Activated CD4-positive, alpha-beta memory T cell treated with anti-CD3 and anti-CD28 coated beads for 36 hours (primary cell): ENCODE measurements at regions of chr10 and their contacts with region 1.

Region 1: GRCh38 chr10:133261726-133262325 is 14.8 kb downstream of the ADAM8 start:
- DNase-seq: peak; percentile 92
- H3K4me3 Mint-ChIP-seq: peak overlapping the region; percentile 79
- H3K27ac Mint-ChIP-seq: peak overlapping the region; percentile 90
- H3K4me1 Mint-ChIP-seq: peaks cover 76% of the 10 kb centered on the region
- H3K27me3 Mint-ChIP-seq: peaks cover 2% of the 10 kb centered on the region

Region 2: GRCh38 chr10:132961787-132962622 is 299.8 kb before region 1 on chr10:
- CTCF ChIA-PET with region 1: no interaction called
- POLR2A ChIA-PET with region 1: no interaction called
- intact Hi-C with region 1: loop called (anchors 5 kb)
- DNase-seq: peak; percentile 89
- H3K4me3 Mint-ChIP-seq: peak overlapping the region; percentile 74
- H3K27ac Mint-ChIP-seq: peak overlapping the region; percentile 79
- H3K4me1 Mint-ChIP-seq: peaks cover 18% of the 10 kb centered on the region
- H3K27me3 Mint-ChIP-seq: peaks cover 9% of the 10 kb centered on the region

Region 3: DNA sequence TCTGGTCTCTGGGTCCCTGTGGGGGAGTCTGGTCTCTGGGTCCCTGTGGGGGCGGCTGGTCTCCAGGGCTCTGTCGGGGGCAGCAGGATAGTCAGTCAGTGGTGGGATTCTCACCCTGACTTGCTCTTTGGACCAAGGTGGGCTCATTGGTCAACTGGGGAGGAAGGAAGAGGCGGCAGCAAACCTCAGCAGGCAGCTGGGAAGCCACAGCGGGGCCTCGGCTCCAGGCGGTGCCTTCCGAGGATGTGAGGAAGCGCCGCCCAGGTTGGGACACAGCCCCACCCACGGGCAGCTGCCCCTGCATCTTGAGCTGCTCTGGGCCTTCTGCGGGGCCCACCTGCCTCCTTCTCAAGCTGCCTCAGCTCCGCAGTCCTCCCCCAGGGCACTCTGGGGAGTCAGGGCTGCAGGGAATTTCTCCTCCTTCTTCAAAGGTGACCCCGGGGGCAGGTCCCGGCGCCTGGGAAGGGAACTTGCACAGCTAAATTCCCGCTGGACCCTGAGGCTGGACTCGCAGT is 122.2 kb before region 1 on chr10:
- CTCF ChIA-PET with region 1: interaction called, 10 read pairs
- POLR2A ChIA-PET with region 1: no interaction called
- intact Hi-C with region 1: no loop called
- DNase-seq: peak; percentile 8
- H3K4me3 Mint-ChIP-seq: no peak overlapping the region
- H3K27ac Mint-ChIP-seq: no peak overlapping the region
- H3K4me1 Mint-ChIP-seq: peaks cover 3% of the 10 kb centered on the region
- H3K27me3 Mint-ChIP-seq: peaks cover 8% of the 10 kb centered on the region

Region 4: DNA sequence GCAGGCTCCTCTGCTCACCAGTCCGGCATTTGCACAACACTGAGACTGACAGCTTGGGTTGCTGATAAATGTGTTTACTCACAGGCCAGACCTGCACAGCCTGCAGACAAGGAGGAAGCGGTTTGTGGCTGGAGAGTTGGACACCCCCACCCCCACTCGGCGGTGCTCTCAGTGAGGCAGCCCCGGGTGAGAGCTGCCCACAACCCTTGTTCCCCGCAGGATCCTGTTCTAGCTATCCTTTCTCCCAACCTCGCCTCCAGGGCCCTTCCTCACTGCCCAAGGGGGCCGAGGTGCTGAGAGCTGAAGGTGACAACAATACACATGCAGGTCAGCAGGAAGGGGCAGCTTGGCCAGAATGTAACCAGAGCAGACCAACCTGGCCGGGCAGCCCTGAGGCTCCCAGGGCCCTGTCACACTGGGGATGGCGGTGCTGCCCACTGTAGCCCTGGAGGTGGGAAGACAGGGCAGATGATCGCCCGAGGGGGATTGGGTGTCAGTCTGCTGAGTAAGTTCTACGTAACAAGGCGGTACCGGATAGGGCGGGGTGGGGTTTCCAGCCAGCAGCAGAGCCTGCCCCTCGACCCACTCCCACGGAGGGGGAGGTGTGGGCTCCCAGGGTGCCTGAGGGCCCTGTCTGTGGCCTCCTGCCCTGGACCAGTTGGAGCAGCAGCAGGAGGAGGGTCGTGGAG is 16.9 kb after region 1 on chr10:
- CTCF ChIA-PET with region 1: interaction called, 28 read pairs
- POLR2A ChIA-PET with region 1: interaction called, 61 read pairs
- intact Hi-C with region 1: loop called (anchors 1 kb)
- DNase-seq: peak; percentile 83
- H3K4me3 Mint-ChIP-seq: peak overlapping the region; percentile 63
- H3K27ac Mint-ChIP-seq: peak overlapping the region; percentile 85
- H3K4me1 Mint-ChIP-seq: peaks cover 28% of the 10 kb centered on the region
- H3K27me3 Mint-ChIP-seq: no peaks in the 10 kb centered on the region

Region 5: DNA sequence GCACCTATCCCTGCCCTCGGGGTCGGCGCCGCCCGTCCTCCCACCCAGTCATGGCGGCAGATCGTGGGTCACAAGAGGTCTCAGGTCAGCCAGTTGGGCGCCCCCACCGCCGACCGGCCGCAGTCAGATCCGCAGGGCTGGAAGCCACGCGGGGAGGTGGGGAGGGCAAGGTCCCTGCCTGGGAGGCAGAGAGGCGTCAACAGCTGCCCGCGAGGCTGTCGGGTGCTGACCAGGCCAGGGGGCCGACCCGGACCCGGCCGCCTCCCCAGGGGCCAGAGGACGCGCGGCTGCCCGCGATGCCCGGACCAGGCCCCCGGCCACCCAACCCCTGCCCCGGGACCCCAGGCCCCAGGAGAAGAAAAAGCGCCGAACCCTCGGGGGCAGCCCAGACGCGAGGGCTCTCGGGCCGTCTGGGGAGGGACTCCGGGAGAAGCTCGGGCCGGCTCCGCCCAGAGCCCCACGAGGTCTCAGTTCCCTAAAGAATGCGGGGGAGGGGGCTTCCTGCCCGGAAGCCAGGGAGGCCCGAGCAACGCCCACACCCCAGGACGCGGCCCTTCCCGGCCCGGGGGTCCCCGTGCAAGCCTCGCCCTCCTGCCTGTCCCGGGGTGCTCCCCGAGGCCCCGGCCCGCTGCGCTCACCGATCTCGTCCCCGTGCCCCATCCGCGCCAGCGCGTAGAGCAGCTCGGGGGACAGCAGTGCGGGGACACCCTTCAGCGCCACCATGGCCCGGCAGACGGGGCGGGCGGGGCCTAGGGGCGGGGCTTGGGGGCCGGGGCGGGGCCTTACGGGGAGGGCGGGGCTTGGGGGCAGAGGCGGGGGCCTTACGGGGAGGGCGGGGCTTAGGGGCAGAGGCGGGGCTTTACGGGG is 95.7 kb after region 1 on chr10 and contains the start of gene FUOM:
- CTCF ChIA-PET with region 1: no interaction called
- POLR2A ChIA-PET with region 1: no interaction called
- intact Hi-C with region 1: no loop called
- DNase-seq: peak; percentile 82
- H3K4me3 Mint-ChIP-seq: peak within 1 kb of the TSS; percentile 78
- H3K27ac Mint-ChIP-seq: peak within 1 kb of the TSS; percentile 69
- H3K4me1 Mint-ChIP-seq: peaks cover 3% of the 10 kb centered on the region
- H3K27me3 Mint-ChIP-seq: no peaks in the 10 kb centered on the region
- total RNA-seq, gene FUOM: 46.5 to 49.8 TPM

Region 6: DNA sequence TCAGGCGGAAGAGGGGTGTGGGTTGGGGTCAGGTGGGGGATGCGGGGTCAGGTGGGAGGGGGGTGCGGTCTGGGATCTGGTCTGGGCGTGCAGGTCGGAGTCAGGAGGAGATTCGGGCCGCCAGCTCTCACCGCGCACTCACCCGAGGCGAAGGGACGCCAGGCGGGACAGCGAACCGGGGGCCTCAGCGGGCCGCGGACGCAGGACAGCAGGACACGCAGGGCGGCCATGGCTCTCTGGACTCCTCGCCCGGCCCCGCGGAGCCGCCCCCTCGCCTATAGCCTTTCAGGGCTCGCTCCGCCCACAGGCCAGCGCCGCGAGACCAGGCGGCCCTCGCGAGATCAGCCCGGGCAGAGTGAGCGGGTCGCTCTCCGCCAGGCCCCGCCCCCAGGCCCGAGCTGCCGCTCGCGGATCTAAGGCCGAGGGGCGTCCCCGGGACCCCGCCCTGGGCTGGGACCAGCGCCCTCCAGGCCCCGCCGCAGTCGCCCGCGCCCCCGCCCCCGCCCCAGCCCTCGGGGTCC is 111.3 kb after region 1 on chr10 and contains the start of gene ECHS1:
- CTCF ChIA-PET with region 1: no interaction called
- POLR2A ChIA-PET with region 1: no interaction called
- intact Hi-C with region 1: loop called (anchors 5 kb)
- DNase-seq: peak; percentile 96
- H3K4me3 Mint-ChIP-seq: peak within 1 kb of the TSS; percentile 81
- H3K27ac Mint-ChIP-seq: peak within 1 kb of the TSS; percentile 33
- H3K4me1 Mint-ChIP-seq: peaks cover 6% of the 10 kb centered on the region
- H3K27me3 Mint-ChIP-seq: no peaks in the 10 kb centered on the region
- total RNA-seq, gene ECHS1: 60.2 to 64.8 TPM

Region 7: GRCh38 chr10:133394064-133394663 is 132.3 kb after region 1 on chr10 and contains the start of gene MTG1:
- CTCF ChIA-PET with region 1: no interaction called
- POLR2A ChIA-PET with region 1: interaction called, 3 read pairs
- intact Hi-C with region 1: loop called (anchors 5 kb)
- DNase-seq: peak; percentile 96
- H3K4me3 Mint-ChIP-seq: peak within 1 kb of the TSS; percentile 96
- H3K27ac Mint-ChIP-seq: peak within 1 kb of the TSS; percentile 95
- H3K4me1 Mint-ChIP-seq: peaks cover 49% of the 10 kb centered on the region
- H3K27me3 Mint-ChIP-seq: no peaks in the 10 kb centered on the region
- total RNA-seq, gene MTG1: 33.9 to 40.3 TPM